Activated B cell treated with CpG ODN at 0.5 μM for 24 hours (primary cell): ENCODE measurements at regions of chr12 and their contacts with region 1.

Region 1: DNA sequence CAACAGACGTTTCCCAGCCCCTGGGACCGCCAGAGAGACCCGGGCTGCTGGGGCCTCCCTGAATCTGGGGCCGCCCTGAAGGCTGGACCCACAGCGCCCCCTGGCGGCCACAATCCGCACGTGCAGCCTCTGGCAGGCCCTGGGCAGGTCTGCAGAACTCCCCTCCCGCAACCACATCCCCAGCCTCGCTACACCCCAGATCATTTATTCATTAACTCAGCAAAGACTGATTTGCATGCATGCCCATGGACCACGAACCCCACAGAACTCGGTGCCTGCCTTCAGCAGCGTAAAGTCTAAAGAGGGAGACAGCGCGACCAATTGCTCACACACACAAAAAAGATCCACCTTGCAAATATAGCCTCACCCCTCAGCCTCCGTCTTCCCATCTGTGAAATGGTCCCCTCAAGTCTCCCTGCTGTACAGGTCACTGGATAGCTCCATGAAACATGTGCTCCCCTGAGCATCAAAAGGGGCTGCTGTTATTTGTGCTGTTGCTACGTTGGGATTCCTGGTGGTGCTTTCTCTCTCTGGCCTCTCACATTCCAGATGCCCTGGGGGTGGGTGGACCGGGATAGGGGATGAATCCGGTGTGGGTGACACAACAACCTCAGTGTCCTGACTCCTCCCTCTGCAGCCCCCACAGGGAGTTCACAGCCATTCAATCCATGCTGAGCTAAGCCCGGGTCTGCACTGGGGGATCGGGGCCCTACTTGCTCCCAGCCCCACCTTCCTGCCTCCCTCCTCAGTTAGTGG is 96.4 kb downstream of the SCARB1 start:
- DNase-seq: peak; percentile 82
- ATAC-seq: peak; percentile 86
- H3K4me3 Mint-ChIP-seq: no peak overlapping the region
- H3K27ac Mint-ChIP-seq: peak overlapping the region; percentile 72
- H3K4me1 Mint-ChIP-seq: peaks cover 15% of the 10 kb centered on the region
- H3K27me3 Mint-ChIP-seq: peaks cover 9% of the 10 kb centered on the region
- CTCF ChIP-seq: peak; percentile 85

Region 2: DNA sequence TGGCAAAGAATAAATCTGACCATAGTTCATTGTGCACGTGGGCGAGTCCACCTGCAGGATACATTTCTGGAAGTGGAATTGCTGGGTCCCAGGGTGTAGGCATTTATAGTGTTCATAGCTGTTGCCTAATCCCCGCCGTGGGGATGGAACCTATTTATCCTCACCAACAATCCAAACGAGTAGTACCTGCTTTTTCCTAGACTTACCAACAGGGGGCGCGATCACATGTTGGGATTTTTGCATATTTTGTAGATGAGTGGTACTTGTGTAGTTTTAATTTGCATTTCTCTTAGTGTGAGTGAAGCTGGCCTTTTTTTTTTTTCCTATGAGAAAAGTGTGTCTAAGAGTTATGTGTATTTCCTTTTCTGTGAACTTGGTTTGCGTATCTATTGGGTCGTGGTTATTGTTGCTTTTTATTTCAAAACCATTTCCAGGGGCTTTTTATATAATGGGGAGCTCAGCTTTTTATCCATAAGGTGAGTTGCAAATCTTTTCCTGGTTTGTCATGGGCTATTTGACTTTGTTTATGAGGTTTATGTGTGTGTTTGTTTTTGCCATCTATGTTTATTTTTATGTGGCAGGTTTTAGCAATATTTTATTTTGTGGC is 861.8 kb before region 1 on chr12:
- CTCF ChIA-PET with region 1: no interaction called
- POLR2A ChIA-PET with region 1: no interaction called
- intact Hi-C with region 1: loop called (anchors 10 kb)
- DNase-seq: no peak
- ATAC-seq: peak; percentile 64
- H3K4me3 Mint-ChIP-seq: no peak overlapping the region
- H3K27ac Mint-ChIP-seq: peak overlapping the region; percentile 43
- H3K4me1 Mint-ChIP-seq: peaks cover 5% of the 10 kb centered on the region
- H3K27me3 Mint-ChIP-seq: peaks cover 14% of the 10 kb centered on the region
- CTCF ChIP-seq: peak; percentile 33

Region 3: DNA sequence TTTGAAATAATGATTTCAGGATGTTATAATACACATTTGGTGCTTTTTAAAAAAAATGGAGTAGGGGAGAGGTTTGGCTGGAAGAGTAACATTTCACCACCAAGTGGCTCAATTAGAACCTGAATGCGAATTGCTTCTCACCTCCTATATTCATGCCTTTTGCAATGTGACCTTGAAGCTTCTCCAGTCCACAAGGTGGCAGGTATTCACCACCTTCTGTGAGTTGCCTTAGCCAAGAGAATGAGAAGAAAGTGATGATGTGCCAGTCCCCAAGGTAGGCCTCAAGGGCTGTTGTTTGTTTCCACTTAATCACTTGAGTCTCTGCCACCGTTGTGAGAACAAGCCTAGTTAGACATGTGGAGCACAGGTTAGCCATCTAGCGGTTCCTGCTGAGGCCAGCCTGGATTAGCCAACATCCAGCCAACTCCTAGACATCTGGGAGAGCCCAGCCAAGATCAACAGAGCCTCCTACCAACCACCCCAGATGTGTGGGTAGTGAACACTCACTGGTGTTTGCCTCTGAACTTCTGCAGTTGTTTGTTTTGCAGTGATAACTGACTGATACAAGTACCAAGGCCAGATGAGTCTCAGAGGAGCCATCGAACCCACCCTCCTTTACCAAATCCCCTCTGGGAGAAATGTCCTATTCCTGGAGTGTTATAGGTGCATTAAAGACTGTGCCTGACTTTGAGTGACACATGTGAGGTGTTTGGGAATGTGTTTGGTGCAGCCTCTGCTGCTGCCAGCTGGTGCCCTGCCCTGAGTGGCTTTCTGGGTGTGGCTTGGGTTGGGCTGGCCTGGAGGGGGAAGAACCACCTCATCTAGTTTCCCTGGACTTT is 604.9 kb before region 1 on chr12:
- CTCF ChIA-PET with region 1: interaction called, 3 read pairs
- POLR2A ChIA-PET with region 1: no interaction called
- intact Hi-C with region 1: loop called (anchors 5 kb)
- DNase-seq: no peak
- ATAC-seq: no peak
- H3K4me3 Mint-ChIP-seq: no peak overlapping the region
- H3K27ac Mint-ChIP-seq: no peak overlapping the region
- H3K4me1 Mint-ChIP-seq: no peaks in the 10 kb centered on the region
- H3K27me3 Mint-ChIP-seq: no peaks in the 10 kb centered on the region
- CTCF ChIP-seq: no peak

Region 4: DNA sequence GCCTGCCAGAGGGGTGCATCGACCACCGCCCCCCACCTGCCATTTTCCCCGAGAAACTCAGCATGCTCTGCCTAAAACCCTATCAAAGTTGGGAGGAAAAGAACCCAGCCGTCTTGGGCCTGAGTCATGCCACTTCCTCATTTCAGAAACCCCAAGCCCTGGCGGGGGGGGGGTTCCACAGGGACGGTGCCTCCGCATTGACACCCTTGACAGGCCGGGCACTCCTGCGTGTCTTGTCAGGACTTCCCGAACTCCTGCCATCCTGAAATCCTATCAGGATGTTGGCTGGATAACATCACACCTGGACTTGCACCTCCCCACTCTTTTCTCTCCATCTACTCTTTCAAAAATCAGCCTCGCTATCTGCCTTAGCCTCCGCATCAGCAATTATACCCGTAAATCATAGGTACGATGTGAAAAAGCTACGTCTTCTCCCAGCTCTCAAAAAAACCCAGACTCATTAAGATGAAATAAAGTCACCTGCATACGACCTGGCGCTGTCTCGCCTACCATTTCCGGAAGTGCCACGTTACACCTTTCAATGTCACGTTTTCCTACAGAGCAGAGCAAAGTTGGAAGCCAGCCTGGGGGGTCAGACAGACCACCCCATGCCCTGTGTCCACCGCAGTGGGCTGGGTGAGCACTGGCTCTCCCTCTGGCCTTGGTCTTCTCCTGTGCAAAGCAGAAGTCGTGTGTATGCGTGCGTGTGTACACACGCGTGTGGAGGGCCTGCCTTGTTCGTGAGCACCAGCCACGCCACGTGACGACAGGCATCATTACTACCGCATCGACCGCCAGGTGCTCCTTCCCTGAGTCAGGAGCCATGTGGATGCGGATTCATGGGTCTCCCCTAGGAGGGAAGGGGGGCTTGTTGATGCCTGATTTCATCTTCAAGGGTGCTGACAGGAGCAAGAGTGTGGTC is 375.6 kb before region 1 on chr12:
- CTCF ChIA-PET with region 1: interaction called, 3 read pairs
- POLR2A ChIA-PET with region 1: no interaction called
- intact Hi-C with region 1: loop called (anchors 2 kb)
- DNase-seq: peak; percentile 73
- ATAC-seq: peak; percentile 77
- H3K4me3 Mint-ChIP-seq: peak overlapping the region; percentile 83
- H3K27ac Mint-ChIP-seq: peak overlapping the region; percentile 79
- H3K4me1 Mint-ChIP-seq: peaks cover 47% of the 10 kb centered on the region
- H3K27me3 Mint-ChIP-seq: no peaks in the 10 kb centered on the region
- CTCF ChIP-seq: no peak

Region 5: DNA sequence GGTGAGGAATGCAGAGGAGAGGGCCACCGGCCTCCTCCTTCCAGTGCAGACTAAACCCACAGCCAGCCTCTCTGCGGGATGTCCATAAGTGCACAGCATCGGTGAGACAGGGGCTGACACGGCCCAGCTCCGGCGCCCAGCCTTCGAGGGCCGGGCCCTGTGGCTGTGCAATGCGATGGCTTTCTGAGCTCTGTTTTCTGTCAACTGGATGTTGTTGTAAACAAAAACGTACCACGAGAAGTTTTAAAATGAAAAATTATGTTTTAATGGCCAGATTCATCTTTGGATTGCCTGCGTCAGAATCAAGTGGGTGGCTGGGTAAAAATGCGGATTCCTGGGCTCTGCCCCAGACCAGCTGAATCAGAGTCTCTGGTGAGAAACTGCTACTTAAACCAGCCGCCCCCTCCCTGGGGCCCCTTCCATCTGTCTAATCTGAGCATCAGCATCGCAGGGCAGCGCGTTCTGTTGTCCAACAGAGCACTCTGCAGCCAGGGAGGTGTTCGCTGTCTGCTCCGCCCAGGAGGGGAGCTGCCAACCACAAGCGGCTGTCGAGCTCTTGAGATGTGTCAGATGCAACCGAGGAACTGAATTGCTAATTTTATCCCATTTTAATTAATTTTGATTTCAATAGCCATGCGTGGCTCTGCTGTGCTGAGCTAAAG is 339.0 kb before region 1 on chr12:
- CTCF ChIA-PET with region 1: no interaction called
- POLR2A ChIA-PET with region 1: no interaction called
- intact Hi-C with region 1: no loop called
- DNase-seq: no peak
- ATAC-seq: no peak
- H3K4me3 Mint-ChIP-seq: no peak overlapping the region
- H3K27ac Mint-ChIP-seq: no peak overlapping the region
- H3K4me1 Mint-ChIP-seq: peaks cover 3% of the 10 kb centered on the region
- H3K27me3 Mint-ChIP-seq: no peaks in the 10 kb centered on the region
- CTCF ChIP-seq: no peak

Region 6: DNA sequence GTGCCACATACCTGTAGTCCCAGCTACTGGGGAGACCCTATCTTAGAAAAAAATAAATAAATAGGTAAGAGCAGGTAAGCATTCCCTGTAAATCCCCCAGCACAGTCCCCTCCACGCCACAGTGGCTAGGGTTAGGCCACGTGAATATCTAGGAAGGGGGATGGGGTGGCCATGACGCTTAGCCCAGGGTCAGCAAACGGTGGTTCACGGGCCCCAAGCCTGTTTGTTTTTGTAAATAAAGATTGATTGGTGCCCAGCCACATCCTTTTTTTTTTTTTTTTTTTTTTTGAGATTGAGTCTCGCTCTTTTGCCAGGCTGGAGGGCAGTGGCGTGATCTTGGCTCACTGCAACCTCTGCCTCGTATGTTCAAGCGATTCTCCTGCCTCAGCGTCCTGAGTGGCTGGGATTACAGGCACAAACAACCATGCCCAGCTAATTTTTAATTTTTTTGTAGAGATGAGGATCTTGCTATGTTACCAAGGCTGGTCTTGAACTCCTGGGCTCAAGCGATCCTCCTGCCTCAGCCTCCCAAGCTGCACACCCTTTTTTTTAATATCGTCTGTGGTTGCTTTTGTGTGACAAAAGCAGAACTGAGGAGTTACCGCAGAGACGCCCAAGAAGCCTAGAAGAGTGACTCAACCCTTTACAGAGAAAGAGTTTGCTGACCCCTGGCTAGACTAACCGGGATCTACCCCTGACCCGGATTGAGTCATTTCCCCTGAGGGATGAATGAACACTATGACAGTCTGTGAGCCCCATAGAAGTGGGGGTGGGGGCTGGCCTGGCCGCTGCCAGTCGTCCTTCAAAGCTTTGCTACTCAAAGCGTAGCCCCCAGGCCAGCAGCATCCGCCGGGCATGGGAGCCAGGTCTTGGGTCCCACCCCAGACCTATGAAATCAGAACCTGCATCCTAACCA is 86.1 kb before region 1 on chr12:
- CTCF ChIA-PET with region 1: no interaction called
- POLR2A ChIA-PET with region 1: no interaction called
- intact Hi-C with region 1: loop called (anchors 2 kb)
- DNase-seq: peak; percentile 26
- ATAC-seq: peak; percentile 96
- H3K4me3 Mint-ChIP-seq: no peak overlapping the region
- H3K27ac Mint-ChIP-seq: no peak overlapping the region
- H3K4me1 Mint-ChIP-seq: peaks cover 14% of the 10 kb centered on the region
- H3K27me3 Mint-ChIP-seq: peaks cover 6% of the 10 kb centered on the region
- CTCF ChIP-seq: no peak

Region 7: DNA sequence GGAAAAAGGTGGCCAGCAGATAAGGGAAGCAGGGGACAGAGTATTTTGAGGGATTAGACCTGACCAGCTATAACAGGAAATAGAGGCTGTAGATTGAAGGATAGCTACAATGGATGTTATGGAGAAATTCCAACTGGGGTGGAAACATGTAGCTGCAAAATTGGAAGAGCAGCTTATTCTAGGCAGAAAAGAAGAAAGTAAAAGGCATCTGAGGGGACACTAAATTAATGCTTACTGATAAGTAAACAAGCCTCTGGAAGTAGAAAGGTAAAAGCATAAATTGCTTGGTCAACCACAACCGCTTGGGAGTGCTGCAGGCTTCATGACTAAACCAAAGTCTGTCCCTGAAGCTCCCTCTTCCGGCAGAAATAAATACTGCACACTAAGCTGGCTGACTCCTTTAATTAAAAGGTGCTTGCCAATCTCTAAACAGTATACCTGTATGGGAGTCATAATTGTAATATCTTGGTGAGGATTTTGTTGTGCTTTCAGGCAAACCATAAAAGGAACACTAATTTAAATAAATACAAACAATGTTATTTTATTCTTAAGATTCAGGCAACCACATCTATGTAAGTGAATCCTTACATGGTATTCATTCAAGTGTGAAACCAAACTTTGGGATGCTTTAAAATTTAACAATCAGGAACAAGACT is 139.5 kb after region 1 on chr12:
- CTCF ChIA-PET with region 1: interaction called, 10 read pairs
- POLR2A ChIA-PET with region 1: no interaction called
- intact Hi-C with region 1: no loop called
- DNase-seq: peak; percentile 44
- ATAC-seq: peak; percentile 93
- H3K4me3 Mint-ChIP-seq: no peak overlapping the region
- H3K27ac Mint-ChIP-seq: peak overlapping the region; percentile 59
- H3K4me1 Mint-ChIP-seq: peaks cover 42% of the 10 kb centered on the region
- H3K27me3 Mint-ChIP-seq: no peaks in the 10 kb centered on the region
- CTCF ChIP-seq: peak; percentile 90